ENCODE measurements at regions of chr11 and their contacts with region 1.

Region 1: GRCh38 chr11:65366340-65366773 is 11.8 kb downstream of the TIGD3 start:
- DNase-seq: peak in 1 of 3 donors; percentile 51
- ATAC-seq: peak; percentile 93
- H3K4me3 ChIP-seq: no peak overlapping the region
- H3K4me1 ChIP-seq: no peaks in the 10 kb centered on the region
- CTCF ChIP-seq: peak; percentile 58

Region 2: GRCh38 chr11:65512306-65512705 is 145.9 kb after region 1 on chr11:
- intact Hi-C with region 1: loop called (anchors 5 kb)
- DNase-seq: peak in 2 of 3 donors; percentile 17 to 20
- ATAC-seq: no peak
- H3K4me3 ChIP-seq: no peak overlapping the region
- H3K4me1 ChIP-seq: peaks cover 8% of the 10 kb centered on the region
- CTCF ChIP-seq: no peak